Activated CD8-positive, alpha-beta memory T cell treated with anti-CD3 and anti-CD28 coated beads, Interleukin-2, amount 10 ng/mL, durations not matched to agents 7 days and 5 days (primary cell): ENCODE measurements at regions of chr9 and their contacts with region 1.

Region 1: DNA sequence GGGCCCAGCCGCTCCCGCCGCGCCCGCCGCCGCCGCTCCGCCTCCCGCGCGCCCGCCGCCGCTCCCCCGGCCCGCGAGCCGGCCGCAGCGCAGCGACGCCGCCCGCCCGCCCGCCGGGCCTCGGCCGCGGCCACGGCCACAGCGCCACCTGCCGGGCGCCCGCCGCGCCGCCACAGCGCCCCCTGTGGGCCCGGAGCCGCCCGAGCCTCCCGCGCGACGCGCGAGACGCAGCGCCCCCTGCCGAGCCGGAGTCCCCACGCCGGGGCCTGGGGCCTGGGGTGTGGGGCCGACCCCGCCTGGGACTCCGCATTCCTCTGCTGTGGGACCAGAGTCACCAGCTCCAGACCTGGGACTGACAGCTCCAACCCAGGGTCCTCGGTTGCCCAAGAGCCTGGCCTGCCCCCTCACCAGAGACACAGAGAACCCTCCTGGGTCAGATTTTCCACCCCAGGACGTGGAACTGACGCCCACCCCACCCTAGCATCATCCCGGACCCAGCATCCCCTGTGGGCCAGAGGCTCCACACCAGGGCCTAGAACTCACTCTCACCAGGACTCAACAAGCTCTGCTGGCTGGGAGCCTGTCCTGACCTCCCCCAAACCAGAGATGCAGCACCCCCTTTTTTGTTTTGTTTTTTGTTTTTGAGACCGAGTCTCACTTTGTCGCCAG is at the start of gene RAPGEF1:
- DNase-seq: peak; percentile 83
- ATAC-seq: peak; percentile 77
- H3K4me3 Mint-ChIP-seq: peak within 1 kb of the TSS; percentile 88
- H3K27ac Mint-ChIP-seq: peak within 1 kb of the TSS; percentile 90
- H3K4me1 Mint-ChIP-seq: peaks cover 52% of the 10 kb centered on the region
- H3K27me3 Mint-ChIP-seq: no peaks in the 10 kb centered on the region
- total RNA-seq, gene RAPGEF1: 187 to 215 TPM

Region 2: DNA sequence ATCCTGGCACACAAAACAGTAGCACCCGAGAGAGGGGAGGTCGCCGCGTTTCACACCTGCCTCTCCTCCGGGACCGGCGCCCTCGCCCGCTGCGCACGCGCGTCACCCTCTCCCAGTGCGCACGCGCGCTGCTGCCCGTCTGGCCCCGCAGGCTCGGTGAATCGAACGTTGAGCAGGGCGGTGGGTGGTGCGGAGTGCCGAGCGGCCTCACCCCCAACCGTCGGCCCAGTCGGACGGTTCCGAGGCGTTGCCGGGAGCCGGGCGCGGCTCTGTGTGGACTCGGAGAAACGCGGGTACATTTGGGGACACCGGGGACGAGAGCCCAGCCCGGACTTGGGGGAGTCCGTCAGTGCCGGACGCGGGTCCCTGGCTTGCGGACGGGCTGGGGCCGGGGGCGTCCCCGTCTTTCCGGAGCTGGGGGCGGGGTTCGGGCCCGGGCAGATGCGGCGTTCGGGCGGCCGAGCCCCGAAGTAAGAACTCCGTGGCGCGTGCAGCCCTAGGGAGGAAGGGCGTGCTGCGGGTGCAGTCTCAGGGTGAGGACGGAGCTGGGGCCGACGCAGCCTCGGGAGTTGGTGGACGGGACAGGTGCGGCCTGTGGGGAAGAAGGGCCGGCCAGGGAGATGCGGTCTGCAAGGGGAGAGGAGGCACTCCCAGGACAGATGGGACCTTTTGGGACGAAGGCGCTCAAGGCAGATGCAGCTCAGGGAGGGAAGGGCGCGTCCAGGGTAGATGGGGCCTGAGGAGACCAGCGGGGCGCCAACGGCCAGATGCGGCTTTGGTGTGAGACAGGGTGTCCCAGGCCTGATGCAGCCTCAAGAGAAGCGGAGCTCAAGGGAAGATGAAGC is 237.1 kb before region 1 on chr9 and contains the start of gene POMT1:
- CTCF ChIA-PET with region 1: interaction called, 11 read pairs
- DNase-seq: peak; percentile 91
- ATAC-seq: peak; percentile 73
- H3K4me3 Mint-ChIP-seq: peak within 1 kb of the TSS; percentile 87
- H3K27ac Mint-ChIP-seq: peak within 1 kb of the TSS; percentile 84
- H3K4me1 Mint-ChIP-seq: peaks cover 62% of the 10 kb centered on the region
- H3K27me3 Mint-ChIP-seq: no peaks in the 10 kb centered on the region
- total RNA-seq, gene POMT1: 41.5 to 53.7 TPM

Region 3: DNA sequence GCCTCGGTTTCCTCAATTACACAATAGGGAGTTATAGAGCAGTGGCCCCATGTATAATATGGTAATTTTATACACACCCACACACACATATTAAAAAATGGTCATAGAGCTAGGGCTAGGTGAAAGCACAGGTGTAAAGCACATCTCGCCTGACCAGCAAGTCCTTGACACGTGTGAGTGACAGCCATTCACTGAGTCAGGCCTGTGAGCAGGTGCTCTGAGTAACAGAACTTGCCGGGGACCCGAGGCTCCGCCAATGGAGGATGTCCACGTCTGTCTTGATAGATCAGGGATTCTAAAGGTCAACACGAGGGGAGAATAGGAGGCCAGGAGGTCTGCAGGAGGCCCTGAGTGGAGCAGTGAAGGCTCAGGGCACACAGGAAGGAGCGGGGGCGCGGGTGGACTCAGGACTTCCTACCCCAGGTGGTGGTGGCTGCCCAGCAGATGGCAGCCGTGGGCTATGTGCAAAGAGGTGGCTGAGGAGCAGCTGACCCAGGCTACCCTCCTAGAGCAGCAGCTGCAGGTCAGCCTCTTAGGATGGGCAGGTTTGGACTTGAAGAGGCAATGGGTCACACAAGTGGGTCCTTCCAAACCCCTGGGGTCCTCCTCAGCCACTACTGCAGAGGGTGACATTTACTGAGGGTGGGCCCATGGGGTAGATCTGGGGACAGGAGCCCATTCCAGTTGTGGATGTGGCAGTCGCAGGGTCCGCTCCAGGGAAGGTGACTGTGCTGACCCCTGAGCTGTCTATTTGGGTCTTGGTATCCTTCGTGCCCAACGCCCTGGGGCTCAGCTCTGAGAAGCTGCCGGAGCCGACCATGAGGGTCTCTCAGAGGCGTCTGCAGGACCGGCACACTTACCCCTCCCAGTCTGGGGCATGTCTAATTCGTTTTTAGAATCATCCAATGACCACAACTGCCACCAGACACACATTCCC is 148.9 kb before region 1 on chr9:
- CTCF ChIA-PET with region 1: interaction called, 208 read pairs
- DNase-seq: peak; percentile 85
- ATAC-seq: peak; percentile 89
- H3K4me3 Mint-ChIP-seq: no peak overlapping the region
- H3K27ac Mint-ChIP-seq: peak overlapping the region; percentile 85
- H3K4me1 Mint-ChIP-seq: peaks cover 44% of the 10 kb centered on the region
- H3K27me3 Mint-ChIP-seq: no peaks in the 10 kb centered on the region

Region 4: DNA sequence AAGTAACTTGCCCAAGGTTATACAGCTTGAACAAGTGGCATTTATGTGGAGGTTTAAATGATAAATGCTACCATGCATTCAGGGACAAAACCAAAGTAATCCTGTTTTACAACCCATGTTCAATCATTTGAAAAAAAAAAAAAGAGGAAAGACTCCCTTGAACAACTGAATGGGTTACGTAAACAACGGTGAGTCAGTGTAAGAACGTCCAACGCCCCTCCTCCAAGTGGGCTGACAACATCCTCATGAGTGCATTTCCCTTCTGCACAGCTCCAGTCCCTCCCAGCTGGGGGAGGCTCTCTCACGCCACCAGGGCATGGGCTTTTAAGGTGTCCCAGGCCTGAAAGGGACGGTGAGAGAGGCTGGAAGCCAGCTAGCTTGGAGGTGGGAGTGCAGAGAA is 104.8 kb before region 1 on chr9:
- CTCF ChIA-PET with region 1: interaction called, 12 read pairs
- DNase-seq: peak; percentile 90
- ATAC-seq: peak; percentile 98
- H3K4me3 Mint-ChIP-seq: no peak overlapping the region
- H3K27ac Mint-ChIP-seq: peak overlapping the region; percentile 88
- H3K4me1 Mint-ChIP-seq: peaks cover 52% of the 10 kb centered on the region
- H3K27me3 Mint-ChIP-seq: no peaks in the 10 kb centered on the region

Region 5: DNA sequence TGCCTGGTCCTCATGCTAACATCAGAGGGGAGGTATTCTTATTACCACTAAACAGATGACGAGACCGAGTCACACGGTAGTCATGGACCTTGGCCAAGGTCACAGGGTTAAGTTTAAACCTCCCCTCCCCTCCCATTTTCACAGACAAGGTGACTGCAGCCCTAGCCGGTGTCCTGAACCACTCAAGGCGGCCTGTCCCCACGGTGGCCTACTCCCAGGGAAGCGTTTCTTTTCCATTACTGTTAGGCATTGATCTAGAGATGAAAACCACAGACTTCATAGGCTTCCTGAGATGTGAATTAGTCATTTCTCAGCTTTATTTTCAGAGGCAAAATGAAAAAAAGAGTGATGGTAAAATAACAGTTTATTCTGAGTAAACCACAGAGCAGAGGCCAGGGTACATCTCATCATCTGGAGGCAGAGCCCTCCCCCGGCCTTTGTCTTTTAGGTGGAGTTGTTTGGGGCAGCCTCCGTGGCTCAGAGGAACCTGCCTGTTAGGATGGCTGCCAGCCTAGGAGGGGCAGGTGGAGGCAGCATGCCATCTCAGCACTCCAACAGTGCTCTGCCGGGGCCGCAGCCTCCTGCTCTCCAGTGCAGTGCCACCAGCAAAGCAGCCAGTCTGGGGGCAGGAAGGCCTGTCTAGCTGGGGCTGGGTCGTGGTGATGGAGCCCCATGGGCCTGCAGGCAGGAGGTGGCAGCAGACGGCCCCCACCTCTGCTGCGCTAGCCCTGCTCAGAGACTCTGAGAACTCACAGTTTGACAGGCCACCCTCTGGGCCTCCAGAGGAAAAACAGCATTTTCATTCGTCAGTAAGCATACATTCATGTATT is 71.5 kb before region 1 on chr9:
- CTCF ChIA-PET with region 1: interaction called, 126 read pairs
- DNase-seq: peak; percentile 82
- ATAC-seq: peak; percentile 68
- H3K4me3 Mint-ChIP-seq: peak overlapping the region; percentile 60
- H3K27ac Mint-ChIP-seq: peak overlapping the region; percentile 99
- H3K4me1 Mint-ChIP-seq: peaks cover 93% of the 10 kb centered on the region
- H3K27me3 Mint-ChIP-seq: no peaks in the 10 kb centered on the region

Region 6: GRCh38 chr9:131701789-131702337 is 38.3 kb before region 1 on chr9:
- CTCF ChIA-PET with region 1: no interaction called
- DNase-seq: no peak
- ATAC-seq: no peak
- H3K4me3 Mint-ChIP-seq: no peak overlapping the region
- H3K27ac Mint-ChIP-seq: no peak overlapping the region
- H3K4me1 Mint-ChIP-seq: peaks cover 64% of the 10 kb centered on the region
- H3K27me3 Mint-ChIP-seq: no peaks in the 10 kb centered on the region

Region 7: DNA sequence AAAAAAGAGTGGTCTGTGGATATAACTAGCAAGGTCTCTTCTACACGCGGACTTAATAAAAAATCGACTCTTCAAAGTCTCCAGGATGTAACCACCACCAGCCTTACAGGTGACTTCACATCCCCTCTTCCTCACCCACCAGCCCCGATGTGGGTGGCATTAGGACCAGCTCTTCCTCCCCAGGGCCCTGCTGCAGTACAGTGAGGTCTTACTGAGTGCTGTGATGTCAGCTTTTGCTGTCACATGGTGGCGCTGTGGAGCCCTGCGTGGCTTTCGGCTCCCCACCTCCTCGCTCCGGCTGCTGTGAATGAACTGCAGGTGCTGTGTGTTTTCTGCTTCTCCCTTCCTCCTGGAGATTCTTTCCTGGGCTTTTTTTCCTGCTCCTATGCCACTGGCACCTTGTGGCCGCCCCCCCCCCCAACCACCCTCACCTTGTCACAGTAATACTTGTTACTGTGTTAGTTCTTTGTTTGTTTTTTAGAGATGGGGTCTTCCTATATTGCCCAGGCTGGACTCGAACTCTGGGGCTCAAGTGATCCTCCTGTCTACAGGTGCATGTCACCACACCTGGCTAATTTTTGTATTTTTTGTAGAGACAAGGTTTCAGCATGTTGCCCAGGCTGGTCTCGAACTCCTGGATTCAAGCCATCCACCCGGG is 15.6 kb after region 1 on chr9:
- CTCF ChIA-PET with region 1: interaction called, 11 read pairs
- DNase-seq: peak; percentile 91
- ATAC-seq: peak; percentile 97
- H3K4me3 Mint-ChIP-seq: no peak overlapping the region
- H3K27ac Mint-ChIP-seq: no peak overlapping the region
- H3K4me1 Mint-ChIP-seq: peaks cover 17% of the 10 kb centered on the region
- H3K27me3 Mint-ChIP-seq: peaks cover 14% of the 10 kb centered on the region

Region 8: DNA sequence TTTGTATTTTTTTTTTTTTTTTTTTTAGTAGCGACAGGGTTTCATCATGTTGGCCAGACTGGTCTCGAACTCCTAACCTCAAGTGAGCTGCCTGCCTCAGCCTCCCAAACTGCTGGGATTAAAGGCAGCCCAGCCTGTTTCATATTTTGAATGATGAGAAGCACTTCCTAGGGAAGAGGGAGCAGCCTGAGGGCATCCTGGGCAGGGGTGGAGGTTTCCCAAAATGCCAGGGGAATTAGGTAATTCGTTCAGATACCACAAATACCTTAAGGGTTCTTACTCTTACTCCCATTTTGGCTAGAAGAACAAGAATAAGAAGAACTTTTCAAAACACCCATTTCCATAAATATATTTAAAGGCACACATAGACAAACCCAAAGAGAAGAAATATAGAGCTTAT is 29.2 kb after region 1 on chr9:
- CTCF ChIA-PET with region 1: no interaction called
- DNase-seq: no peak
- ATAC-seq: no peak
- H3K4me3 Mint-ChIP-seq: no peak overlapping the region
- H3K27ac Mint-ChIP-seq: no peak overlapping the region
- H3K4me1 Mint-ChIP-seq: no peaks in the 10 kb centered on the region
- H3K27me3 Mint-ChIP-seq: peaks cover 33% of the 10 kb centered on the region

Region 9: DNA sequence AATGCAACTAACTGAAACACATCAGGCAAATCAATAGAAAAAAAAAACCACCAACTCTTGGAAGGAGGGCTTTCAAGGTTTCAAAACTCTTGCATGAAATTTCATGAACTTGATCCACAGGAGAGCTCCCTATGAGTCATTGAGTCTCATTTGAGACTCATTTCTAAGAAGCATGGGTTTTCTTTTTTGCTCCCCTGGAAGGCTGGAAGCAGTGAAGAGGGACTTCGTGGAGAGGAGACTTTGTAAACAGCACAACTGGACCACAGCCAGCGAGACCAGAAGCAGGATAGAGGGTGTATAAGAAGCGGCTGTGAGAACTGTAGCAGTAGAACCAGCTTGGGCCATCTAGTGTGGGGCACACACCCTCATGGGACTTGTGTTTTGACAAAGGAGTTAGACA is 41.0 kb after region 1 on chr9:
- CTCF ChIA-PET with region 1: no interaction called
- DNase-seq: no peak
- ATAC-seq: peak; percentile 20
- H3K4me3 Mint-ChIP-seq: no peak overlapping the region
- H3K27ac Mint-ChIP-seq: no peak overlapping the region
- H3K4me1 Mint-ChIP-seq: peaks cover 8% of the 10 kb centered on the region
- H3K27me3 Mint-ChIP-seq: peaks cover 43% of the 10 kb centered on the region

Region 10: GRCh38 chr9:131833906-131834305 is 93.8 kb after region 1 on chr9:
- CTCF ChIA-PET with region 1: no interaction called
- DNase-seq: no peak
- ATAC-seq: no peak
- H3K4me3 Mint-ChIP-seq: no peak overlapping the region
- H3K27ac Mint-ChIP-seq: no peak overlapping the region
- H3K4me1 Mint-ChIP-seq: peaks cover 9% of the 10 kb centered on the region
- H3K27me3 Mint-ChIP-seq: peaks cover 8% of the 10 kb centered on the region